ENCODE measurements at regions of chr13 and their contacts with region 1.

Region 1: DNA sequence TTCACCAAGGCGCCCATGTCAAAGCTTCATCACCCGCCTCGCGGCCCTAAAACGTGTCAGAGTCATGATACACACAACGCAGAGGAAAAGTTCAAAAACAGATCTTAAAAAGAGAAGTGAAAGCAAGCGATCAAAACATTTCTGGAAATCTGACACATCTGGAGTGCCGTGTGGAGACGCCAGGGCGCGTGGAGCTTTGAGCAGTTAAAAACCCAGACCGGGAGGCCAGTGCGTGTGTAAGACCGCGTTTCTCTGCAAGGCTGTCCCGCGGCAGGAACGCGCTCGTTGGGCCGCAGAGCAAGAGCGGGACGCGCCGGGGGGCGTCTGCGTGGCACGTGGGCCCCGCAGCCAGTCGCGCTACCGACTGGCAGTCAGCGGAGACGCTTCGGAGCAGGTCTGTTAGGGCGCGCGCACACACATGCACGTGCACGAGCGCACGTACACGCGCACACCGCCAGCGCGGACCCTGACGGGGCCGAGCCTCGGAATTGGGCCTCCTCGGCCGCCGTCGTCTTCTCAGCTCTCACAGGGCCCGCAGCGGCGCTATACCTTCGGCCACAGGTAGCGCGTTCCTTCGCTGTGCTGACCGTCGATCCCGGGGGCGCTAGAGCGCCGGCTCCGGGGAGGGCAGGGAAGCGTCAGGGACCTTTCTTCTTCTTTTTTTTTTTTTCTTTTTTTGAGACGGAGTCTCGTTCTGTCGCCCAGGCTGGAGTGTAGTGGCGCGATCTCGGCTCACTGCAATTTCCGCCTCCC is 35.8 kb downstream of the RNF6 start:
- DNase-seq: peak; percentile 90
- ATAC-seq: peak; percentile 98

Region 2: GRCh38 chr13:26476111-26476781 is 290.0 kb after region 1 on chr13:
- intact Hi-C with region 1: loop called (anchors 10 kb)
- DNase-seq: no peak
- ATAC-seq: peak; percentile 75

Region 3: GRCh38 chr13:26698392-26699196 is 512.3 kb after region 1 on chr13:
- intact Hi-C with region 1: loop called (anchors 10 kb)
- DNase-seq: peak; percentile 90
- ATAC-seq: peak; percentile 90

Measured in sciatic nerve (tissue), 2 donors.